PC-3 (cell line): ENCODE measurements at regions of chr2 and their contacts with region 1.

Region 1: GRCh38 chr2:189179570-189179950 is at the start of gene COL5A2:
- DNase-seq: no peak
- ATAC-seq: no peak
- H3K4me3 ChIP-seq: no peak within 1 kb of the TSS
- H3K27ac ChIP-seq: no peak within 1 kb of the TSS
- H3K4me1 ChIP-seq: peaks cover 4% of the 10 kb centered on the region; the same call in 1 of the 2 replicates
- H3K27me3 ChIP-seq: no peaks in the 10 kb centered on the region
- CTCF ChIP-seq: no peak
- total RNA-seq, gene COL5A2: 56.2 and 60.1 TPM in 2 replicates

Region 2: DNA sequence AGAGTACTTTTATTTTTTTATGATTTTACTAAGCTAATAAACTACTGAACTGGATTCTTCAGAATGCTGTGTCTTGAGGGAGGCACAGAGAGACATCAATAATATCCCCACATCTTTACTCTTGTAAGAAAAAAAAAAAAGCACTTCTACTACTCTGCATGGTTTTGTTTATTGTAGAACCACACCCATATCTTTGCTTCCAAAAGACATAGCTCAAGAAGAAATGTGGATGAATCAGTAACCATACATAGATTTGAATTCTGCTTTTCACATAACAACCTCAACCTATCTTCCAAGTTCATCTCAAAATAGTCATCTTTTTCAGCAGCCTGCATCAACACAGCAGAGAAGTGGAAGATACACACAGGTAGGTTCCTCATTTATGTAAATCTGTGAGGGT is 12.2 kb after region 1 on chr2:
- CTCF ChIA-PET with region 1: no interaction called
- POLR2A ChIA-PET with region 1: no interaction called
- intact Hi-C with region 1: loop called (anchors 1 kb)
- DNase-seq: peak; percentile 66
- ATAC-seq: peak; percentile 77
- H3K4me3 ChIP-seq: no peak overlapping the region
- H3K27ac ChIP-seq: 0 out of 2 replicates have a peak overlapping the region, but pooled peaks have one; percentile 8
- H3K4me1 ChIP-seq: peaks cover 20% of the 10 kb centered on the region
- H3K27me3 ChIP-seq: no peaks in the 10 kb centered on the region
- CTCF ChIP-seq: no peak